Adrenal gland (tissue), 19 donors: ENCODE measurements at regions of chr6 and their contacts with region 1.

Region 1: DNA sequence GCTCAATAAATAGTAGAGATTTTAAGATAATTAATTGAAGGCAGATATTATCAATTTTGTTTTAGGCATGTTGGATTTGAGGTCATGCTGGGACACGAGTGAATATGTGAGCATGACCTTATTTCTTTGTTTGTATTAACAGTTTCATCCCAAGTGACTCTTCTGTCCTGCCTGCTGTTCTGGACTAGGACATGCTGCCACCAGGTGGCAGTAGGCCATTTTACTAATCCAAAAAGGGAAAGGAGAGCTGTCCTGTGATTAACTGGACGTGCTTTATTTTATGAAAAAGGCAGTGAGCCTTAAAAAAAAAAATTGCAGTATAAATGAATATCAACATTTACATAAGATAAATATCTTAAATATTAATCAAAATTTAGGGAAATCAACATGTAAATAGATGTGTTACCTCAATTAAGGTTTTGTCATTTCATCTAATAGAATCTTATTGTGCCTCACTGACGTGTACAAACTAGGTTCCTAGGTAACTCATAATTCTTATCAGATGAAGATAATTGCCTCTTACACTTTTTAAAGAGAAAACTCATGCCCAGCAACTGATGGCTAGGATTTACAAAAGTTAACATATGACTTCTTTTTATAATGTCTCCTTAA is 49.8 kb downstream of the FRK start:
- DNase-seq: peak; percentile 77 to 89 (median 80)
- H3K4me3 ChIP-seq: no peak overlapping the region
- H3K27ac ChIP-seq: no peak overlapping the region
- H3K4me1 ChIP-seq: peaks cover 0 to 5% of the 10 kb centered on the region in 2 donors
- H3K27me3 ChIP-seq: no peaks in the 10 kb centered on the region
- CTCF ChIP-seq: peak; percentile 69 to 84 (median 77)
- POLR2A ChIP-seq: no peak

Region 2: DNA sequence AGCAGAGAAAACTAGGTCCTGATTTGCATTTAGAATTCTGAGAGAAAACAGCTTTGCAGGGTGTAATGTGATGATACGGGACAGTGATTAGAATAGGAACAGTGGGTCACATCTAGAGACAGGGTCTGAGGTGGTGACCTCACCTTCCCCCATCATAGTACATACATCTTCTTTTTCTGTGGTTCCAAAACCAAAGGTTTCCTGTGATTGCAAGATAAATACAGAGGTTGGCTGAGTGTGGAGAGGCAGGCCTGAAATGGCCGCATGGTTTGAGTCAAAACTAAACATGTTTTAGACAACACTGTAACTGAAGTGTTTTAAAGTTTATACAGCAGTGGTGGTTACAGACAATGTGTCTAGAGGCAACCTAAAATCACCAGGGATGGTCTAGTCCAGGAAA is 79.4 kb after region 1 on chr6:
- intact Hi-C with region 1: loop called in 1 of 2 experiments (anchors 5 kb)
- DNase-seq: no peak
- H3K4me3 ChIP-seq: no peak overlapping the region
- H3K27ac ChIP-seq: no peak overlapping the region
- H3K4me1 ChIP-seq: peaks cover 3 to 6% of the 10 kb centered on the region in 2 donors
- H3K27me3 ChIP-seq: no peaks in the 10 kb centered on the region
- CTCF ChIP-seq: no peak
- POLR2A ChIP-seq: no peak

Region 3: GRCh38 chr6:116096979-116097816 is 86.3 kb after region 1 on chr6:
- intact Hi-C with region 1: loop called (anchors 2 to 5 kb)
- DNase-seq: no peak
- H3K4me3 ChIP-seq: no peak overlapping the region
- H3K27ac ChIP-seq: no peak overlapping the region
- H3K4me1 ChIP-seq: peaks cover 28% of the 10 kb centered on the region in 2 donors
- H3K27me3 ChIP-seq: no peaks in the 10 kb centered on the region
- CTCF ChIP-seq: peak; percentile 34 to 78 (median 60)
- POLR2A ChIP-seq: no peak

Region 4: GRCh38 chr6:116328528-116328903 is 317.6 kb after region 1 on chr6:
- intact Hi-C with region 1: no loop called
- DNase-seq: no peak
- H3K4me3 ChIP-seq: no peak overlapping the region
- H3K27ac ChIP-seq: peak overlapping the region in 3 of 5 donors; percentile 37 to 74 (median 48)
- H3K4me1 ChIP-seq: no peaks in the 10 kb centered on the region
- H3K27me3 ChIP-seq: no peaks in the 10 kb centered on the region
- CTCF ChIP-seq: no peak
- POLR2A ChIP-seq: no peak